ENCODE measurements at regions of chr16 and their contacts with region 1.

Region 1: DNA sequence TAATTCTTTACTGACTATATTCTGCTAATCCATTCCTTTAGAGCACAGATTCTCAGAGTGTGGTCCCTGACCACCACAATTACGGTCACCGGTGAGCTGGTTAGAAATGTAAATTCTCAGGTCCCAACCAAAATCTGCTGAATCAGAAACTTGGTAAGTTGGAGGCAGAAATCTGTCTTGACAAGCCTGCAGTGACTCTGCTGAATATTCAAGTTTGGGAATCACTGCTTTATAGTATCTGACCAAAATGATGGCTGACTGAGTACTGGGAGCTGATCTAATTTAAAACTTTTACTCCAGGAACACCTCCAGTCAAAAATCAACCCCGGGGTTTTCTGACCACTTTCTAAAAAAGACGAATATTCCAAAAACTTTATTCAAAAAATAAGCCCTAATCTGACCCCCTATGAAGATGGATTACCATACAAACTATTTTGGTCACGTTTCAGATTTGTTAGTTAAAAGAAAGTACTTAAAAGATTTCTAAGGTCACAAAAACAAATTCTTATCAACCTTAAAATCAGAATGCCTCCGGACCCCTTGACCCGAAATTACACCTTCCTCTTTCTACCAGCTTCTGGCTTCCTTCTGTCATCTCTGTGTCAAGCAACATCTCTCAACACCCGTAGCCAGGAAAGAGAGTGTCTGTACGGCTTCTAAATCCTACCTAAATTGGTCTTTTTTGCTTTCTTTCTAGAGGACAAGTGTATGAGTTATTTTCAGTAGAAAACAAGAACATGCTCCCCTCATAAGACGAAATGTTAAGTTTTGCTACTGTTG is 38.6 kb downstream of the CREBBP start:
- DNase-seq: no peak
- ATAC-seq: no peak
- H3K4me3 ChIP-seq: no peak overlapping the region
- H3K4me3 Mint-ChIP-seq: no peak overlapping the region
- H3K27ac ChIP-seq: no peak overlapping the region
- H3K27ac Mint-ChIP-seq: no peak overlapping the region
- H3K4me1 ChIP-seq: peaks cover 0 to 7% of the 10 kb centered on the region in 2 experiments
- H3K4me1 Mint-ChIP-seq: peaks cover 67 to 74% (median 73%) of the 10 kb centered on the region in 3 donors
- H3K27me3 ChIP-seq: no peaks in the 10 kb centered on the region
- H3K27me3 Mint-ChIP-seq: no peaks in the 10 kb centered on the region

Region 2: GRCh38 chr16:3766177-3766576 is 75.7 kb before region 1 on chr16:
- CTCF ChIA-PET with region 1: no interaction called
- POLR2A ChIA-PET with region 1: interaction called in 1 of 2 experiments, 13 read pairs
- DNase-seq: no peak
- ATAC-seq: no peak
- H3K4me3 ChIP-seq: no peak overlapping the region
- H3K4me3 Mint-ChIP-seq: no peak overlapping the region
- H3K27ac ChIP-seq: no peak overlapping the region
- H3K27ac Mint-ChIP-seq: no peak overlapping the region
- H3K4me1 ChIP-seq: no peaks in the 10 kb centered on the region
- H3K4me1 Mint-ChIP-seq: peaks cover 0 to 8% (median 3%) of the 10 kb centered on the region in 3 donors
- H3K27me3 ChIP-seq: no peaks in the 10 kb centered on the region
- H3K27me3 Mint-ChIP-seq: no peaks in the 10 kb centered on the region

Region 3: GRCh38 chr16:4111748-4112696 is 270.1 kb after region 1 on chr16:
- CTCF ChIA-PET with region 1: no interaction called
- POLR2A ChIA-PET with region 1: interaction called in 1 of 2 experiments, 12 read pairs
- DNase-seq: no peak
- ATAC-seq: no peak
- H3K4me3 ChIP-seq: no peak overlapping the region
- H3K4me3 Mint-ChIP-seq: peak overlapping the region; percentile 44 to 78 (median 64)
- H3K27ac ChIP-seq: no peak overlapping the region
- H3K27ac Mint-ChIP-seq: peak overlapping the region in 1 of 2 donors; percentile 20
- H3K4me1 ChIP-seq: peaks cover 0 to 41% of the 10 kb centered on the region in 2 experiments
- H3K4me1 Mint-ChIP-seq: peaks cover 46 to 59% (median 59%) of the 10 kb centered on the region in 3 donors
- H3K27me3 ChIP-seq: no peaks in the 10 kb centered on the region
- H3K27me3 Mint-ChIP-seq: no peaks in the 10 kb centered on the region

Measured in T-cell (primary cell).